Natural killer cell (primary cell): ENCODE measurements at regions of chr5 and their contacts with region 1.

Region 1: DNA sequence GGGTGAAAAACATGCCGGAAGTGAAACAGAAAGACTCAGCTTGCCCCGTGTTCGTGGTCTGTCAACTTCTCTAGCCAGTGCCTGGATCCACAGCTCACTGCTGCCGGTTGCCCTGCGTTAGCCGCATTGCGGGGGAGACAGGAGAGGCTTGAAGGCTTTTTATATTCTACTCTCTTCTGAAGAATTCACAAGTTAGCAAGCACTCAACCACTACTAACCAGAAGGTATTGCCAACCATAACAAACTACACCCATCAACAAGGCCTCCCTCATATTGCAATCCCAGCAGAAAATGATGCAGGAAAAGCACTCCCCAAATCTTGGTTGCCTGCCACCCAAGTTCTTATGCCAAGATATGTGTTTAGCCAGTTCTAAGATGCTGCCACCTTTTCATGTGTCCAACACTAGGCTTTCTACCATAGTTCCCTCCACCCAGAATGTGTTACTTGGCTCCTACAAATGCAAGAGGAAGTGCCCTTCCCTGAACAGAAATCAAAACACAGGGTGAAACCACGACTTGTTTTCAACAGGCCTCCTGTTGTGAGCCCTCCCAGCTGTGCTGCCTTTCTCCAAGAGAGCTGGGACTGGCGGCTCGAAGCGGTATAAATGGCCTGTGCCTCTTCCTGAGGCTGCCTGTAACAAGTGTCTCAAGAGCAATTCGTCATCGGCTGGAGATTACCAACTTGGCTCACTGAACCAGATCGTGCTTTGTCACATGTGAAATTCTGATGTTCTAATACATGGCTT is 129.0 kb downstream of the SNX18 start:
- DNase-seq: peak; percentile 73 to 83
- ATAC-seq: peak; percentile 88 to 97 (median 96)
- H3K4me3 ChIP-seq: no peak overlapping the region
- H3K4me3 Mint-ChIP-seq: peak overlapping the region; percentile 84
- H3K27ac ChIP-seq: peak overlapping the region; percentile 86
- H3K27ac Mint-ChIP-seq: peak overlapping the region; percentile 86 to 89
- H3K4me1 ChIP-seq: peaks cover 56% of the 10 kb centered on the region
- H3K4me1 Mint-ChIP-seq: peaks cover 57 to 69% of the 10 kb centered on the region in 2 donors
- H3K27me3 ChIP-seq: no peaks in the 10 kb centered on the region
- H3K27me3 Mint-ChIP-seq: no peaks in the 10 kb centered on the region
- CTCF ChIP-seq: no peak

Region 2: GRCh38 chr5:54180616-54181015 is 465.9 kb before region 1 on chr5:
- intact Hi-C with region 1: no loop called
- DNase-seq: no peak
- ATAC-seq: no peak
- H3K4me3 ChIP-seq: no peak overlapping the region
- H3K4me3 Mint-ChIP-seq: no peak overlapping the region
- H3K27ac ChIP-seq: no peak overlapping the region
- H3K27ac Mint-ChIP-seq: no peak overlapping the region
- H3K4me1 ChIP-seq: no peaks in the 10 kb centered on the region
- H3K4me1 Mint-ChIP-seq: peaks cover 25 to 45% of the 10 kb centered on the region in 2 donors
- H3K27me3 ChIP-seq: no peaks in the 10 kb centered on the region
- H3K27me3 Mint-ChIP-seq: no peaks in the 10 kb centered on the region
- CTCF ChIP-seq: no peak

Region 3: DNA sequence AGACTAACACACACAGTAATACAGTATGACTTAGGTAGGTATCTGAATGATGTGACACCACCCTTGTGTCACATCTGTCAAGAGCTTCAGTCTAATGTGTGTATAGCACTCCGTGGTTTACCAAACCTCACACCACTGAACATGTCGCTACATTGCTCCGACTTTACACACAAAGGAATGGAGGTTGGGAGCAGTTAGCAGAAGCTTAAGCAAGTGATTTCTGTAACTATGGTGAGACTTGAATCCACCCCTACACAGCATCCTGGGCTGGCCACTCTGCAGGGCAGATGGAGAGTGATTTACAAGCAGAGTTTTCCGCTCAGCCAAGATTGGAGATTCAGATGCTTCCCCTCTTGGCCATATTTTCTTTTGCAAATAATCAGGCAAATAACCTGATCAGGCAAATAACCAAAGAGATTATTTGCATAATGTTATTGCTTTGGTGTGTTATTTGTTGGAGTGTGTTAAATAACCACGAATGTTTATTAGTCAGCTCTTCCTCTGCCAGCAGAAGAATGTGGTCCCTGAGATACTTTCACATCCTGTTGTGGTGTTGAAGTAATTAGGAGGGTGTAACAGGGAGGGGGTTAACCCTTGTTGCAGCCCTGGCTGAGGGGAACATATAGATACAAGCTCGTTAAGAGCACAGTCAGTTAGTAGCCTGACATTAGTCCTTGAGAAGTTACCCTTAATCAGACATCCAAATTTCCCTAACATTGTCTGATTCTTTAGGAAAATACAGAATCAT is 36.2 kb before region 1 on chr5:
- intact Hi-C with region 1: loop called (anchors 1 kb)
- DNase-seq: peak; percentile 35 to 66
- ATAC-seq: peak; percentile 79 to 86 (median 85)
- H3K4me3 ChIP-seq: no peak overlapping the region
- H3K4me3 Mint-ChIP-seq: peak overlapping the region; percentile 89
- H3K27ac ChIP-seq: peak overlapping the region; percentile 55
- H3K27ac Mint-ChIP-seq: peak overlapping the region; percentile 87 to 94
- H3K4me1 ChIP-seq: peaks cover 34% of the 10 kb centered on the region
- H3K4me1 Mint-ChIP-seq: peaks cover 32 to 50% of the 10 kb centered on the region in 2 donors
- H3K27me3 ChIP-seq: no peaks in the 10 kb centered on the region
- H3K27me3 Mint-ChIP-seq: no peaks in the 10 kb centered on the region
- CTCF ChIP-seq: no peak

Region 4: DNA sequence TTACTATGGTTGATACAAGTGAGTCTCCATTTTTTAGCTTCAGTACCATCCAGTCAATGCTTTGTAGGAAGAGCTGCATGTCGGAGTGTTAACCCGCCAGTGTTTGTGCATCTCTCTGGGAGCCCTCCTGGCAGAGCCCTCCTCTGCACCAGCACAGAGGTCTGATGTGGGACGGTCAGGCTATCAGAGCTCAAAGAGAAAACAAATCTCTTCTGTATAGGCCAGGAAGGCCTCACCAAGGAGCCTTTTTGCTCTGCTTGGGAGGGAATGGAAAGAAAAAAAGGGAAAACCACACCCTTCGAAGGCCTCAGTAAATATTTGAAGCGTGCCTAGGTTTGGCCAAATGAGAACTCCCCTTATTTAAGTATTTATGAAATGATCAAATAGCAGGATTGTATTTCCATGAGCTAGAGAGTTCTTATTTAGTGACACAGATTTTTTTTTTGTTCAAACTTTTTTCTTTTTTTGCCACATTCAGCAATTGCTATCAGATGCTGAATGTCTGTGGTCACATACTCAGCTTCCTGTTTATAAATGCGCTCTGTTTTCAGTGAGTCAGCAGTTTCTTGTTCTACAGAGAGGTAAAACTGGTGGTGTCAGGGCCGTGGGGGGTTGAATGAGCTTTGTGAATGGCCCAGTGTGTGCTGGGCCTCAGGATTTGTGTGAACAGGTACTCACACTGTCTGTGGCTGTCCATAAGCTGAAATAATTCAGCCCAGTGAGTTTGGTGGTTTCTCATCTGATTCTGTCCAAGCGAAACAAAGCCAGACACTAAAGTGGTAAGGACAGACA is 97.7 kb after region 1 on chr5:
- intact Hi-C with region 1: loop called (anchors 1 kb)
- DNase-seq: peak; percentile 41 to 76
- ATAC-seq: peak; percentile 92 to 97 (median 96)
- H3K4me3 ChIP-seq: no peak overlapping the region
- H3K4me3 Mint-ChIP-seq: peak overlapping the region; percentile 47
- H3K27ac ChIP-seq: peak overlapping the region; percentile 48
- H3K27ac Mint-ChIP-seq: peak overlapping the region; percentile 73 to 84
- H3K4me1 ChIP-seq: peaks cover 25% of the 10 kb centered on the region
- H3K4me1 Mint-ChIP-seq: peaks cover 32 to 52% of the 10 kb centered on the region in 2 donors
- H3K27me3 ChIP-seq: no peaks in the 10 kb centered on the region
- H3K27me3 Mint-ChIP-seq: peaks cover 0 to 4% of the 10 kb centered on the region in 2 donors
- CTCF ChIP-seq: no peak

Region 5: DNA sequence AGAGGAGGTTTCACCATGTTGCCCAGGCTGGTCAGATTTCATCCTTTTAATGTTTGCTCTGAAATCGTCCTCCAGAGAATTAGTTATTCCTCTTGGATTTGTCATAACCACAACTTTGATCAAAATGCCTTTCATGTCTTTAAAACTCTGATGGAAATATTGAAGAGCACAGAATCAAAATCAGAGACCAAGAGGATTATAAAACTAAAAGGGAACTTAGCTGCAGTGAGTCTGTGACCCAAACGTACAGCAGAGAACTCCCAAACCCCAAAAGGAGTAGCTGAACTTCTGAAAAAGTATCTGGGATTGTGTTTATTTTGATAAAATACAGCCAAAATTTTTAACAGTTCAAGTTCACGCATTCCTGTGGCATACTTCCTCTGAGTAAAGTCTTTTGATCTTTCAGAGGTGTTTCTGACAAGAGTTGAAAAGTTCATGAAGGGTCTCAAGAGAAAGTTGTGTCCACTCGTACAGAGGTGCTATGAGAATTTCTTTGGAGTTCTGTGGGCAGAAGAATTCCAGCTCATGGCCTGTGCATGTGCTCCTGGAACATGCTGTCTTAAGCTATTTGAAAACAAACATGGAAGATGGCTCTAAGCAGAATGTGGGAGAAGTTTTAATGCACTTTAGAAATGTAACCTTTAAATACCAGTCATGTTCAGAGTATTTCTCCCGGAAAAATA is 214.8 kb after region 1 on chr5:
- intact Hi-C with region 1: no loop called
- DNase-seq: no peak
- ATAC-seq: no peak
- H3K4me3 ChIP-seq: no peak overlapping the region
- H3K4me3 Mint-ChIP-seq: no peak overlapping the region
- H3K27ac ChIP-seq: no peak overlapping the region
- H3K27ac Mint-ChIP-seq: no peak overlapping the region
- H3K4me1 ChIP-seq: no peaks in the 10 kb centered on the region
- H3K4me1 Mint-ChIP-seq: no peaks in the 10 kb centered on the region
- H3K27me3 ChIP-seq: no peaks in the 10 kb centered on the region
- H3K27me3 Mint-ChIP-seq: peaks cover 3 to 23% of the 10 kb centered on the region in 2 donors
- CTCF ChIP-seq: no peak

Region 6: GRCh38 chr5:55062039-55062779 is 415.7 kb after region 1 on chr5:
- intact Hi-C with region 1: loop called (anchors 5 kb)
- DNase-seq: peak; percentile 63 to 69
- ATAC-seq: peak; percentile 77 to 87 (median 85)
- H3K4me3 ChIP-seq: peak overlapping the region; percentile 38
- H3K4me3 Mint-ChIP-seq: peak overlapping the region; percentile 90
- H3K27ac ChIP-seq: peak overlapping the region; percentile 83
- H3K27ac Mint-ChIP-seq: peak overlapping the region; percentile 95 to 96
- H3K4me1 ChIP-seq: peaks cover 26% of the 10 kb centered on the region
- H3K4me1 Mint-ChIP-seq: peaks cover 72 to 86% of the 10 kb centered on the region in 2 donors
- H3K27me3 ChIP-seq: no peaks in the 10 kb centered on the region
- H3K27me3 Mint-ChIP-seq: no peaks in the 10 kb centered on the region
- CTCF ChIP-seq: no peak